CD4-positive, alpha-beta T cell (primary cell): ENCODE measurements at regions of chr1 and their contacts with region 1.

Region 1: GRCh38 chr1:42784946-42785693 is at the start of gene TMEM269:
- DNase-seq: peak; percentile 20 to 62 (median 46)
- ATAC-seq: peak; percentile 91
- H3K4me3 ChIP-seq: peak within 1 kb of the TSS; percentile 61
- H3K4me3 Mint-ChIP-seq: peak within 1 kb of the TSS; percentile 89
- H3K27ac ChIP-seq: no peak within 1 kb of the TSS
- H3K27ac Mint-ChIP-seq: peak within 1 kb of the TSS; percentile 49
- H3K4me1 ChIP-seq: peaks cover 16% of the 10 kb centered on the region
- H3K4me1 Mint-ChIP-seq: peaks cover 21% of the 10 kb centered on the region
- H3K27me3 ChIP-seq: no peaks in the 10 kb centered on the region
- H3K27me3 Mint-ChIP-seq: no peaks in the 10 kb centered on the region
- CTCF ChIP-seq: no peak
- total RNA-seq, gene TMEM269: 0.60 to 1.1 TPM

Region 2: GRCh38 chr1:42846257-42847110 is 61.4 kb after region 1 on chr1 and contains the start of gene ZNF691:
- CTCF ChIA-PET with region 1: no interaction called
- POLR2A ChIA-PET with region 1: no interaction called
- intact Hi-C with region 1: no loop called
- DNase-seq: peak; percentile 73 to 96 (median 82)
- ATAC-seq: peak; percentile 98
- H3K4me3 ChIP-seq: peak within 1 kb of the TSS; percentile 96
- H3K4me3 Mint-ChIP-seq: peak within 1 kb of the TSS; percentile 94
- H3K27ac ChIP-seq: peak within 1 kb of the TSS in 1 of 2 donors; percentile 56
- H3K27ac Mint-ChIP-seq: peak within 1 kb of the TSS; percentile 67
- H3K4me1 ChIP-seq: peaks cover 19% of the 10 kb centered on the region
- H3K4me1 Mint-ChIP-seq: peaks cover 38% of the 10 kb centered on the region
- H3K27me3 ChIP-seq: no peaks in the 10 kb centered on the region
- H3K27me3 Mint-ChIP-seq: no peaks in the 10 kb centered on the region
- CTCF ChIP-seq: peak; percentile 47
- total RNA-seq, gene ZNF691: 1.2 to 1.7 TPM

Region 3: GRCh38 chr1:44354840-44355581 is 1569.9 kb after region 1 on chr1 and contains the start of gene ERI3:
- CTCF ChIA-PET with region 1: no interaction called
- POLR2A ChIA-PET with region 1: no interaction called
- intact Hi-C with region 1: loop called in 1 of 2 experiments (anchors 5 kb)
- DNase-seq: peak; percentile 93 to 98 (median 95)
- ATAC-seq: peak; percentile 100
- H3K4me3 ChIP-seq: peak within 1 kb of the TSS; percentile 80
- H3K4me3 Mint-ChIP-seq: peak within 1 kb of the TSS; percentile 94
- H3K27ac ChIP-seq: peak within 1 kb of the TSS in 1 of 2 donors; percentile 29
- H3K27ac Mint-ChIP-seq: peak within 1 kb of the TSS; percentile 63
- H3K4me1 ChIP-seq: peaks cover 19% of the 10 kb centered on the region
- H3K4me1 Mint-ChIP-seq: peaks cover 45% of the 10 kb centered on the region
- H3K27me3 ChIP-seq: no peaks in the 10 kb centered on the region
- H3K27me3 Mint-ChIP-seq: no peaks in the 10 kb centered on the region
- CTCF ChIP-seq: no peak
- total RNA-seq, gene ERI3: 19.7 to 20.7 TPM